Activated naive CD8-positive, alpha-beta T cell treated with anti-CD3 and anti-CD28 coated beads, Interleukin-2, amount 10 ng/mL, durations not matched to agents 7 days and 5 days (primary cell): ENCODE measurements at regions of chr2 and their contacts with region 1.

Region 1: GRCh38 chr2:27628767-27629709 is at the starts of genes CCDC121 and GPN1:
- DNase-seq: peak; percentile 92
- ATAC-seq: peak; percentile 98
- H3K4me3 Mint-ChIP-seq: no peak within 1 kb of the TSS
- H3K27ac Mint-ChIP-seq: no peak within 1 kb of the TSS
- H3K4me1 Mint-ChIP-seq: peaks cover 18% of the 10 kb centered on the region
- H3K27me3 Mint-ChIP-seq: no peaks in the 10 kb centered on the region
- total RNA-seq, gene CCDC121: 1.1 to 1.6 TPM
- total RNA-seq, gene GPN1: 32.7 to 37.4 TPM

Region 2: DNA sequence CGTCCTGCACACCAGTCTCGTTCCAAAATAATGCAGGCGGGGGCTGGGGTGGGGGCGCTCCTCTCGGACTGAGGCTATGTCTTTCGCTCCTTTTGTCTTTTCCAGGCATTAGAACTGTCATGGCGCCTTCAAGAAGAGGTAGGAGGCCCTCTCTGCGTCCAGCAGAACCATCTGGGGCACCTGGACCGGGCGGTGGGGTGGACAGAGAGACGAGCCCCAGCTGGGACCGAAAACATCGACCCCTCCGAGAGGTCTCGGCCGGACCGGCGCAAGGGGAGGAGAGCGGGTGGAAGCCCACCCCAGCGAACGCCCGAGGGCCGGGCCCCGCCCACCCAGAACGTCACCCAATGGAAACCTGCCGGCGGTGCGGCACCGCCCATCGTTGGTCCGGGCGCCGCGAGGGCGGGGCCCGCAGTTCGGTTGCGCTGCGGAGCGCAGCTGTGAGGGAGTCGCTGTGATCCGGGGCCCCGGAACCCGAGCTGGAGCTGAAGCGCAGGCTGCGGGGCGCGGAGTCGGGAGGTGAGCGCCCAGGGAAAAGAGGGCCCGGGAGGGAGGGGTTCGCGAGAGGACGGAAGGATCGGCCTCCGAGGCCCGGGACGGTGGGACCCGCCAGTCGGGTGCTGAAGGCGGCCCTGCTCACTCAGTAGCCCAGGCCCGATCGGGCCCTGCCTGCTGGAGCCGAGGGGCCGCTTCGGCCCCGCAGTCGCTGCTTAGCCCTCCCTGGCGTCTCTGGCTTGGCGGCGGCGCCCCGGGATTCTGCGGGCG is 200.6 kb before region 1 on chr2 and contains the start of gene NRBP1:
- POLR2A ChIA-PET with region 1: interaction called, 15 read pairs
- DNase-seq: peak; percentile 98
- ATAC-seq: peak; percentile 88
- H3K4me3 Mint-ChIP-seq: peak within 1 kb of the TSS; percentile 99
- H3K27ac Mint-ChIP-seq: peak within 1 kb of the TSS; percentile 99
- H3K4me1 Mint-ChIP-seq: peaks cover 19% of the 10 kb centered on the region
- H3K27me3 Mint-ChIP-seq: peaks cover 2% of the 10 kb centered on the region
- total RNA-seq, gene NRBP1: 92.2 to 92.5 TPM

Region 3: GRCh38 chr2:27559228-27559627 is 69.8 kb before region 1 on chr2:
- POLR2A ChIA-PET with region 1: no interaction called
- DNase-seq: no peak
- ATAC-seq: no peak
- H3K4me3 Mint-ChIP-seq: no peak overlapping the region
- H3K27ac Mint-ChIP-seq: no peak overlapping the region
- H3K4me1 Mint-ChIP-seq: no peaks in the 10 kb centered on the region
- H3K27me3 Mint-ChIP-seq: peaks cover 21% of the 10 kb centered on the region

Region 4: GRCh38 chr2:27582695-27583389 is 46.2 kb before region 1 on chr2 and contains the start of gene ZNF512:
- POLR2A ChIA-PET with region 1: interaction called, 11 read pairs
- DNase-seq: peak; percentile 86
- ATAC-seq: peak; percentile 94
- H3K4me3 Mint-ChIP-seq: peak within 1 kb of the TSS; percentile 98
- H3K27ac Mint-ChIP-seq: peak within 1 kb of the TSS; percentile 97
- H3K4me1 Mint-ChIP-seq: peaks cover 36% of the 10 kb centered on the region
- H3K27me3 Mint-ChIP-seq: peaks cover 11% of the 10 kb centered on the region
- total RNA-seq, gene ZNF512: 55.0 to 56.6 TPM